B cell (primary cell): ENCODE measurements at regions of chr17 and their contacts with region 1.

Region 1: DNA sequence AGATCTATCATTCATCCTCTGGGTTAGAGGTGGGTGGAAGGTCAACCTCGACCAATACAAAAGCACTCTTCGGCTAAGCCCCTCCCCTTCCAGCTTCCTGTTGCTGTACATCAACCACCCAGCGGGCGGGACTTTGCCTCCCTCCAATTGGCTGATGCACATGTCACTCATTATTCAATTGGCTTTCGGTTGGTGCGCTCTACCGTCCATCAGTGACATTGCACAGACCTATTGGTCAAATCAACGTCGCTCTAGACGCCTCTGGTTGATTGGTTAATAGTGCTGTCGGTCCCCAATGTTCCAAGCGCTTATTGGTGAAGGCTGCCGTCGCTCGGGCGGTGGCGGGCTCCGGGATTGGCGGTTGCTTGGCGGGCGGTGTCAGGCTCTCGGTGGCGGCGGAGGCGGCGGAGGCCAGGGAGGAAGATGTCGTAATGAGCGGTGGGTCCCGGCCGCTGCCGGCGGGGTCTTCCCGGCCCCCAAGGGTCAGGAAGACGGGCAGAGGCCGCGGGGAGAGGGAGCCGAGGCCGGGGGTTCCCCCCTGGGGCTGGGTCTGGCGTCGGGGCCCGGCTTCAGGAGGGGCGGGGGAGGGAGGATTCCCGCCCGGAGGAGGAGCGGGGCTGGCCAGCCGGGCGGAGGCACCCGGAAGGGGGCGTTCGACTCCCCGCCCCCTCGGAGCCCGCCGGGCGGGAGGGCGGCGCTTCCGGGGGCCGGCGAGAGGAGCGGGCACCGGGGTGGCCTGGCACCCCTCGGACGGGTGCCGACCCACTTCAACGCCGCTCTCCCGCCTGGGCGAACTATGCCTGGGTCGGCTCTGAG is at the start of gene SP2:
- DNase-seq: peak; percentile 100
- ATAC-seq: peak; percentile 85
- H3K4me3 ChIP-seq: peak within 1 kb of the TSS; percentile 73 to 97 (median 90)
- H3K4me3 Mint-ChIP-seq: peak within 1 kb of the TSS; percentile 96
- H3K27ac ChIP-seq: peak within 1 kb of the TSS; percentile 94 to 98
- H3K27ac Mint-ChIP-seq: peak within 1 kb of the TSS; percentile 100
- H3K4me1 ChIP-seq: peaks cover 19 to 23% of the 10 kb centered on the region in 2 donors
- H3K4me1 Mint-ChIP-seq: peaks cover 50% of the 10 kb centered on the region
- H3K27me3 ChIP-seq: no peaks in the 10 kb centered on the region
- H3K27me3 Mint-ChIP-seq: no peaks in the 10 kb centered on the region
- CTCF ChIP-seq: no peak
- total RNA-seq, gene SP2: 32.5 and 35.4 TPM in 2 replicates

Region 2: DNA sequence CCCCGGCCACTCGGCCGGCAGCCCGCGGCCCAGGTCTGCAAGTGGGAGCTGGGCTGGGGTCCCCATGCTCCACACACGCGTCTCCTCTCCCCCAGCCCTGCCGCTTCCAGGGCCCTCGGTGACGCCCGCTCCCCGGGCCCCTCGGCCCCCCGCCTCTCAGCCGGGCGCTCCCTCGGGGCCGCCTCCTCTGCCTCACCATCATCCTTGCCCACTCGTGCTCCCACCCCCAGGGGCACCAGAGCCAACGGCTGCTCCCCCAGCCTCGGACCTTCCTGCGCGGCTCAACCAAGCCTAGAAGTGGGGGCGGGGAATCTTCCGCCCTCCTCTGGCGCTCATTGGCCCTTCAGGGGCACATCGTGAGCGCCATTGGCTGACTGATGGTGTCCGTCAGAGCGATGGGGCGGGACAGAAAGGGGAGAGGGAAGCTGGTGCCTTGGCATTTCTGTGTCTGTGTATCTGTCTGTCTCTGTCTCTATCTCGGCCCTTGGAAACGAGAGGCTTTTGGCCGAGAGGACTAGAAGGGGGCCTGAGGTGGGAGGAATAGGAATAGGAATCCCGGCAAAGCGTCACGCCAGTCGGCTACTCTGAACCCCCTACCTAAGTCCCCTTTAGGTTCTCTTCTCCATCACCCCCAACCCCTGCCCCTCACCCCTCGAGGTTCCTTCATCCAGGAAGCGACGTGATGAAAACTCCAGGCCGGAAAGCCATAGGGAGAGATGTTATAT is 795.9 kb before region 1 on chr17:
- CTCF ChIA-PET with region 1: no interaction called
- POLR2A ChIA-PET with region 1: no interaction called
- intact Hi-C with region 1: no loop called
- DNase-seq: peak; percentile 89
- ATAC-seq: peak; percentile 97
- H3K4me3 ChIP-seq: peak overlapping the region; percentile 25 to 89 (median 78)
- H3K4me3 Mint-ChIP-seq: peak overlapping the region; percentile 99
- H3K27ac ChIP-seq: peak overlapping the region; percentile 59 to 86
- H3K27ac Mint-ChIP-seq: peak overlapping the region; percentile 100
- H3K4me1 ChIP-seq: peaks cover 13 to 33% of the 10 kb centered on the region in 2 donors
- H3K4me1 Mint-ChIP-seq: peaks cover 33% of the 10 kb centered on the region
- H3K27me3 ChIP-seq: no peaks in the 10 kb centered on the region
- H3K27me3 Mint-ChIP-seq: no peaks in the 10 kb centered on the region
- CTCF ChIP-seq: no peak

Region 3: GRCh38 chr17:47643116-47643515 is 252.9 kb before region 1 on chr17:
- CTCF ChIA-PET with region 1: no interaction called
- POLR2A ChIA-PET with region 1: no interaction called
- intact Hi-C with region 1: no loop called
- DNase-seq: no peak
- ATAC-seq: no peak
- H3K4me3 ChIP-seq: no peak overlapping the region
- H3K4me3 Mint-ChIP-seq: no peak overlapping the region
- H3K27ac ChIP-seq: no peak overlapping the region
- H3K27ac Mint-ChIP-seq: peak overlapping the region; percentile 60
- H3K4me1 ChIP-seq: peaks cover 3 to 4% of the 10 kb centered on the region in 2 donors
- H3K4me1 Mint-ChIP-seq: peaks cover 16% of the 10 kb centered on the region
- H3K27me3 ChIP-seq: no peaks in the 10 kb centered on the region
- H3K27me3 Mint-ChIP-seq: no peaks in the 10 kb centered on the region
- CTCF ChIP-seq: no peak

Region 4: GRCh38 chr17:47831003-47831933 is 64.8 kb before region 1 on chr17 and contains the starts of genes LRRC46 and MRPL10:
- CTCF ChIA-PET with region 1: interaction called, 436 read pairs
- POLR2A ChIA-PET with region 1: interaction called, 15 read pairs
- intact Hi-C with region 1: loop called (anchors 1 kb)
- DNase-seq: peak; percentile 93
- ATAC-seq: peak; percentile 94
- H3K4me3 ChIP-seq: peak within 1 kb of the TSS; percentile 70 to 97 (median 96)
- H3K4me3 Mint-ChIP-seq: peak within 1 kb of the TSS; percentile 92
- H3K27ac ChIP-seq: peak within 1 kb of the TSS; percentile 69 to 81
- H3K27ac Mint-ChIP-seq: peak within 1 kb of the TSS; percentile 89
- H3K4me1 ChIP-seq: peaks cover 19 to 21% of the 10 kb centered on the region in 2 donors
- H3K4me1 Mint-ChIP-seq: peaks cover 25% of the 10 kb centered on the region
- H3K27me3 ChIP-seq: no peaks in the 10 kb centered on the region
- H3K27me3 Mint-ChIP-seq: no peaks in the 10 kb centered on the region
- CTCF ChIP-seq: peak; percentile 40
- total RNA-seq, gene LRRC46: 2.2 and 2.4 TPM in 2 replicates
- total RNA-seq, gene MRPL10: 34.8 and 37.4 TPM in 2 replicates

Region 5: GRCh38 chr17:47941236-47941994 is 45.4 kb after region 1 on chr17 and contains the start of gene PNPO:
- CTCF ChIA-PET with region 1: no interaction called
- POLR2A ChIA-PET with region 1: interaction called, 7 read pairs
- intact Hi-C with region 1: loop called (anchors 1 kb)
- DNase-seq: peak; percentile 94
- ATAC-seq: peak; percentile 99
- H3K4me3 ChIP-seq: peak within 1 kb of the TSS; percentile 50 to 84 (median 76)
- H3K4me3 Mint-ChIP-seq: peak within 1 kb of the TSS; percentile 88
- H3K27ac ChIP-seq: peak within 1 kb of the TSS; percentile 63 to 83
- H3K27ac Mint-ChIP-seq: peak within 1 kb of the TSS; percentile 82
- H3K4me1 ChIP-seq: peaks cover 11 to 22% of the 10 kb centered on the region in 2 donors
- H3K4me1 Mint-ChIP-seq: peaks cover 31% of the 10 kb centered on the region
- H3K27me3 ChIP-seq: no peaks in the 10 kb centered on the region
- H3K27me3 Mint-ChIP-seq: no peaks in the 10 kb centered on the region
- CTCF ChIP-seq: no peak
- total RNA-seq, gene PNPO: 12.4 and 14.7 TPM in 2 replicates

Region 6: DNA sequence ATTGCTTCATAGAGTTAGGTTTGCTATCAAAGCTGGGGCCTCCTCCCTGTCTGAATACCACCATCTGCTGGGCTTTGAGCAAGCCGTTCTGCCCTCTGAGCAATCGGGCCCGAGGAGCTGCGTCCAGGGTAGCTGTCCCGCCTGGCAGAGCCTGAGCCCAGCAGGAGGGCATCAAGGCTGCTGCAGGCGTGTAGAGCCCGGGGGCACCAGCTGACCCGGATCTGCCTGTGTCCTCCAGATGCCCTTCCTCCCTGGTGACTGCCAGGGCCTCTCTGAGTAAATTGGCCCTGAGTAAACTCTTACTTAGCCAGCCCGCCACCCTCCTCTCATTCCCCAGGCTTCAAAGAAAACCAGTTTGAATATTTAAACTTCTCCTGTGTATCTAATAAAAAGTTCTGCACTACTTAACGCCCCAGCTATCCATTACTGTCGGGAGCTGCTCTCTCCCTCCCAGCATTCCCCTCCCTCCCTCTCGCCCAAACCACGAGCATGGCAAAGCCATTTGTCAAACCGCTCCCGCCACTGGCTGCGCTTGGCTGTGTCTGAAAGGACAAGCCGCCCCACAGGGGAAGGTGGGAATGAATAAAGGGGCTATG is 91.3 kb after region 1 on chr17:
- CTCF ChIA-PET with region 1: no interaction called
- POLR2A ChIA-PET with region 1: no interaction called
- intact Hi-C with region 1: no loop called
- DNase-seq: no peak
- ATAC-seq: no peak
- H3K4me3 ChIP-seq: no peak overlapping the region
- H3K4me3 Mint-ChIP-seq: no peak overlapping the region
- H3K27ac ChIP-seq: no peak overlapping the region
- H3K27ac Mint-ChIP-seq: no peak overlapping the region
- H3K4me1 ChIP-seq: no peaks in the 10 kb centered on the region
- H3K4me1 Mint-ChIP-seq: no peaks in the 10 kb centered on the region
- H3K27me3 ChIP-seq: peaks cover 0 to 4% (median 0%) of the 10 kb centered on the region in 4 experiments
- H3K27me3 Mint-ChIP-seq: no peaks in the 10 kb centered on the region
- CTCF ChIP-seq: no peak

Region 7: DNA sequence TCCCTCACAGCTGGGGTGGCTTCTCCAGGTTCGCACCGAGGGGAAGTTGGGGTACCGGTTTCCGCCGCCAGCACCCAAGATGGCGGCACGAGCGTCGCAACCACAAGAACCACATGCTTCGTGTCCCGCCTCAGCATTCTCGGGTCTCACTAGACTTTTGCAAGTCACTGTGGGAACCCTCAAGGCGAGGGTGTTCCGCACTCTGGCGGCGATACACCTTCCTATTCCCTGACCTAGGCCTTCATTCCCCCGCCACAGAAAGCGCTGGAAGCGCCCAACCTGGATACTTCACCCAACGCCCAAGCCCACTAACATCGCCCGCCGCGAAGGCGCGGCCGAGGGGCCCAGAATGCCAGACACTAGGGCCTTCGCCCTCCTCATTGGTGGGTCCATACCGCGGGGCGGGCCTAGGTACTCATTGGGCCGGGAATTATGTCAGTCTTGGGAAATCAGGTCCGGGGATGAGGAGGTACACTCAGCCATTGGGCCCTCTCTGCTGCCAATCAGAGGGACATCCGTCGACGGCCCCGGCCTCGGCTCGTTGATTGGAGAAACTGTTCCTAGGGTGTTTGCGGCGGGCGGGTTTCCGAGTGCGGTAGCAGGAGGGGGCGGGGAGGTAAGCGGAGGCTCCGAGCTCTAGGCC is 151.8 kb after region 1 on chr17 and contains the start of gene NFE2L1:
- CTCF ChIA-PET with region 1: no interaction called
- POLR2A ChIA-PET with region 1: interaction called, 6 read pairs
- intact Hi-C with region 1: loop called (anchors 1 kb)
- DNase-seq: peak; percentile 98
- ATAC-seq: peak; percentile 94
- H3K4me3 ChIP-seq: peak within 1 kb of the TSS; percentile 63 to 84 (median 78)
- H3K4me3 Mint-ChIP-seq: peak within 1 kb of the TSS; percentile 97
- H3K27ac ChIP-seq: peak within 1 kb of the TSS; percentile 87 to 90
- H3K27ac Mint-ChIP-seq: peak within 1 kb of the TSS; percentile 100
- H3K4me1 ChIP-seq: peaks cover 30 to 35% of the 10 kb centered on the region in 2 donors
- H3K4me1 Mint-ChIP-seq: peaks cover 52% of the 10 kb centered on the region
- H3K27me3 ChIP-seq: no peaks in the 10 kb centered on the region
- H3K27me3 Mint-ChIP-seq: no peaks in the 10 kb centered on the region
- CTCF ChIP-seq: no peak
- total RNA-seq, gene NFE2L1: 58.1 and 66.4 TPM in 2 replicates